ENCODE measurements at regions of chr12 and their contacts with region 1.

Region 1: DNA sequence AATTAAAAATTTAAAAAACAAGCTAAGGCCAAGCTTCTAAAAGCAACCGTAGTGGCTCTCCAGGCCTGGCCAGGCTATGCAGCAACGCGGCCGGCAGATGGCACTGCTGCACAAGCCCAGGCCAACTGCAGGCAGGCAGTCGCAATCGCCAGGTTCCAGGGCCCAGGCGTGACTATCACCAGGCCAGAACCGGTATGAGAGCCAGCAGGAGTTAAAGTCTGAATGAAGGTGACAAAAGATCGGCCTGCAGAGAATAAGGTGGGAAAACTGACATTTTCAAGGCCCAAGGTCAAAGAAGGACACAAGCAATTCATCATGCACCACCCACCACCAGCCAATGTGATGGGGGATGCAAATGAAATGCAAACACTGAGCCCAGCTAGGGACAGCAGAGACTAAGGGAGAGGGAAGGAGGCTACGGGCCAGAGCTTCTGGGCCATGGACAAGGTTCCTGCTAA is 43.6 kb upstream of the ANO2 start:
- DNase-seq: peak; percentile 79 to 92 (median 90)
- ATAC-seq: peak; percentile 88 to 92
- H3K4me3 ChIP-seq: no peak overlapping the region
- H3K27ac ChIP-seq: no peak overlapping the region
- H3K4me1 ChIP-seq: no peaks in the 10 kb centered on the region
- H3K27me3 ChIP-seq: no peaks in the 10 kb centered on the region

Region 2: GRCh38 chr12:6039894-6040568 is 51.3 kb after region 1 on chr12:
- intact Hi-C with region 1: loop called (anchors 2 to 5 kb)
- DNase-seq: peak in 2 of 3 donors; percentile 48 to 71
- ATAC-seq: peak; percentile 71 to 74
- H3K4me3 ChIP-seq: no peak overlapping the region
- H3K27ac ChIP-seq: no peak overlapping the region
- H3K4me1 ChIP-seq: no peaks in the 10 kb centered on the region
- H3K27me3 ChIP-seq: no peaks in the 10 kb centered on the region

Region 3: DNA sequence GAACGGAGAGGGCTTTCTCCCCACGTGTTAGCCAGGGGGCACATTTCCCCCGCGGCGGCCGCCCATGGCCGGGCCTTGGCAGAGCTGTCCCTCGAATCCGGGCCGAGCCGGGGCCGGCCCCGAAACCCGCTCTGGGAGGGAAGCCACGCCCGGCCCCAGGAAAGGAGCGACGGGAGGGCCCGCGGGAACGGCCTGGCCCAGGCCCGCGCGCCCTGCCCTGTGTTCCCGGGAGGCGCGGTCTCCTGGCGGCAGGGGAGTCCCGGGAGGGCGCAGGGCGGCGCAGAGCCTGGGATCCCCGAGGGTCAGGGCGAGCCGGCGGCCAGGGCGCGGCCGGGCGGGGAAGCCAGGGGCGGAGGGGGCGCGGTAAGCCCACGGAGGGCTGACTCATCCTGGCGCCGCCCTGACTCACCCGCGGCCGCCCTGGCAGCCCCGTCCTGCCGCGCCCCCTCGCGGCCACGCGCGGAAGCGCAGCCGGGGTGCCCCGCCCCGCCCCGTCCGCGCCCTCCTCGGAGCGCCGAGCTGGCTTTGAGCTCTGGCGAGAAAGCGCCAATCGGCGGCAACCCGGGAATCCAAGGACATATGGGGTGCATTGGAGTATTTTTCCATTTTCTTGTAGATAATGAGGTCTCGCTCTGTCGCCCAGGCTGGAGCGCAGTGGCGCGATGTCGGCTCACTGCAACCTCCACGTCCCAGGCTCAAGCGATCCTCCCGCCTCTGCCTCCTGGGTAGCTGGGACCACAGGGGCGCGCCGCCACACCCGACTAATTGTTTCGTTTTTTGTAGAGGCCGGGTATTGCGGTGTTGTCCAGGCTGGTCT is 290.0 kb after region 1 on chr12:
- intact Hi-C with region 1: loop called in 2 of 4 experiments (anchors 5 kb)
- DNase-seq: peak; percentile 91 to 95 (median 94)
- ATAC-seq: peak; percentile 83 to 95
- H3K4me3 ChIP-seq: peak overlapping the region; percentile 37
- H3K27ac ChIP-seq: peak overlapping the region; percentile 31
- H3K4me1 ChIP-seq: peaks cover 13% of the 10 kb centered on the region
- H3K27me3 ChIP-seq: no peaks in the 10 kb centered on the region

Measured in right cardiac atrium (tissue), 5 donors.